ENCODE measurements at regions of chr11 and their contacts with region 1.

Region 1: DNA sequence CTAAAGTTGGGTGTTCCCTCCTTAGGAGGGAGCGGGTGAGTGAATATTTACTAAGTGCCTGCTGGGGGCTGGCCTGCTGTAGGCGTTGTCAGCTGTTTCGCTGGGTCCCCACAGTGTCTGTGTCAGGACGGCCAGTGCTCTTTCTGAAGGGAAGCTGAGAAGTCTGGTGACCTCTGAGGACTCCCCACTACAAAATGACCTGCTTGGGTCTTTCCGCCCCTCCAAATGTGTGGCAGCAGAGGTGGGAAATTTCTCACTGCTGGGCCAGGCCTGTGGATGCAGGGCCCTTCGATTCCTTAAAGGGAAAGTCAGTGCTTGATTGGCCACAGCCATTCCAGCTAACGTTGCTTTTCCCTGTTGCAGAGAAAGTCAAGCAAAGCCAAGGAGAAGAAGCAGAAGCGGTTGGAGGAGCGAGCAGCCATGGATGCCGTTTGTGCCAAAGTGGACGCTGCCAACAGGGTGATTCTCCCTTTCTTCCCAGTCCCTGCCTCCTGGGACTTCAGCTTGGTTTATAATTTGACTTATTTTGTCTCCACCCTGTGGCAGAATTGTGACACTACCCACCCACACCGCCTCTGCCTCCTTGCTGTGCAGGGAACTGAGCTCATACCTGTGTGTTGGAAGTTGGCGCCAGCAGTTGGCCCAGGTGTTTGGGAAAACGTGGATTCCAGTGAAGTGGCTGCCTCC is 6.8 kb downstream of the NAA40 start:
- DNase-seq: peak; percentile 68
- H3K4me3 ChIP-seq: no peak overlapping the region
- H3K27ac ChIP-seq: no peak overlapping the region
- H3K4me1 ChIP-seq: no peaks in the 10 kb centered on the region
- H3K27me3 ChIP-seq: no peaks in the 10 kb centered on the region
- CTCF ChIP-seq: peak; percentile 50 to 60
- POLR2A ChIP-seq: no peak

Region 2: GRCh38 chr11:63802637-63803414 is 142.8 kb before region 1 on chr11:
- CTCF ChIA-PET with region 1: no interaction called
- POLR2A ChIA-PET with region 1: no interaction called
- dilution Hi-C with region 1: no loop called
- intact Hi-C with region 1: no loop called
- DNase-seq: no peak
- H3K4me3 ChIP-seq: no peak overlapping the region
- H3K27ac ChIP-seq: no peak overlapping the region
- H3K4me1 ChIP-seq: peaks cover 4% of the 10 kb centered on the region
- H3K27me3 ChIP-seq: no peaks in the 10 kb centered on the region
- CTCF ChIP-seq: no peak
- POLR2A ChIP-seq: no peak

Region 3: GRCh38 chr11:63871962-63872799 is 73.4 kb before region 1 on chr11:
- CTCF ChIA-PET with region 1: interaction called, 10 read pairs
- POLR2A ChIA-PET with region 1: no interaction called
- dilution Hi-C with region 1: no loop called
- intact Hi-C with region 1: no loop called
- DNase-seq: peak; percentile 81
- H3K4me3 ChIP-seq: no peak overlapping the region
- H3K27ac ChIP-seq: no peak overlapping the region
- H3K4me1 ChIP-seq: peaks cover 17% of the 10 kb centered on the region
- H3K27me3 ChIP-seq: no peaks in the 10 kb centered on the region
- CTCF ChIP-seq: peak; percentile 25 to 31
- POLR2A ChIP-seq: no peak

Region 4: GRCh38 chr11:63916837-63917691 is 28.6 kb before region 1 on chr11 and contains the start of gene RCOR2:
- CTCF ChIA-PET with region 1: interaction called, 13 read pairs
- POLR2A ChIA-PET with region 1: no interaction called
- dilution Hi-C with region 1: no loop called
- intact Hi-C with region 1: no loop called
- DNase-seq: peak; percentile 52
- H3K4me3 ChIP-seq: peak within 1 kb of the TSS; percentile 25 to 34 (median 32)
- H3K27ac ChIP-seq: no peak within 1 kb of the TSS
- H3K4me1 ChIP-seq: peaks cover 7% of the 10 kb centered on the region
- H3K27me3 ChIP-seq: peaks cover 0 to 4% of the 10 kb centered on the region in 2 experiments
- CTCF ChIP-seq: no peak
- POLR2A ChIP-seq: no peak
- total RNA-seq, gene RCOR2: 0.13 and 1.7 TPM in 2 replicates

Region 5: GRCh38 chr11:63958008-63958407 is 12.4 kb after region 1 on chr11:
- CTCF ChIA-PET with region 1: interaction called, 15 read pairs
- POLR2A ChIA-PET with region 1: no interaction called
- dilution Hi-C with region 1: no loop called
- intact Hi-C with region 1: no loop called
- DNase-seq: no peak
- H3K4me3 ChIP-seq: no peak overlapping the region
- H3K27ac ChIP-seq: no peak overlapping the region
- H3K4me1 ChIP-seq: no peaks in the 10 kb centered on the region
- H3K27me3 ChIP-seq: no peaks in the 10 kb centered on the region
- CTCF ChIP-seq: no peak
- POLR2A ChIP-seq: no peak